Posterior vena cava (tissue), 2 donors: ENCODE measurements at regions of chr5 and their contacts with region 1.

Region 1: DNA sequence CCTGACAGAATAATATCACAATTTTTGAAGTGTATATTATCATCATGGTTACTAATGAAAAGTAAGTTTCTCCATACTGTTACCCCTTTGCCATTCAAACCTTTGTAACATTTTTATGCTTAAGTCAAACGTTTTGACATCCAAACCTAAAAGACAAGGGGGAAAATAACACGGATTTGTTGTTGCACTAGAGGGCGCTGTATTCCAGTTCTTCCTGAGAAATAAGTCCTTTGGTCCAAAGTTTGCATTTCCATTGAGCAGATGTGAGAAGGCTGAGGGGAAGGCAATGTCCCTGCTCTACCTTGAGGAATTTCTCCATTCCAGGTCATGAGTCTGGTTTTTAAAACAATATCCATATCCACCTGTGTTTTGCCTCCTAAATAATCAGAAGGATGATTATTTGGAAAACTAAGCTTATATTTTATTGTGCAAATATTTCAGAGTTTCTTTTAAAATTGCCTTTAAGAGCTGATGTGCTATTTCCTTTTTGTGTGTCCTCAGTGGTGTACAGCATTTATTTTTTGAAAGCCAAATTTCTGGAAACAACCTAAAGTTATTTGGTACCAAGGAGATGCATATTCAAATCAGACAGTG is 9.7 kb downstream of the LECT2 start:
- DNase-seq: no peak

Region 2: GRCh38 chr5:136062366-136063274 is 117.6 kb after region 1 on chr5:
- intact Hi-C with region 1: loop called in 1 of 2 experiments (anchors 10 kb)
- DNase-seq: no peak

Region 3: GRCh38 chr5:136080483-136081216 is 135.6 kb after region 1 on chr5:
- intact Hi-C with region 1: loop called in 1 of 2 experiments (anchors 5 kb)
- DNase-seq: peak; percentile 97

Region 4: GRCh38 chr5:136141561-136141960 is 196.5 kb after region 1 on chr5:
- intact Hi-C with region 1: no loop called
- DNase-seq: no peak